Activated CD8-positive, alpha-beta T cell treated with anti-CD3 and anti-CD28 coated beads for 36 hours (primary cell): ENCODE measurements at regions of chr20 and their contacts with region 1.

Region 1: GRCh38 chr20:64168381-64169090 is 4.3 kb downstream of the MYT1 start:
- DNase-seq: no peak
- ATAC-seq: no peak
- H3K4me3 Mint-ChIP-seq: no peak overlapping the region
- H3K27ac Mint-ChIP-seq: no peak overlapping the region
- H3K4me1 Mint-ChIP-seq: no peaks in the 10 kb centered on the region
- H3K27me3 Mint-ChIP-seq: peaks cover 22% of the 10 kb centered on the region
- CTCF ChIP-seq: no peak

Region 2: GRCh38 chr20:64069614-64070243 is 98.8 kb before region 1 on chr20:
- CTCF ChIA-PET with region 1: no interaction called
- POLR2A ChIA-PET with region 1: no interaction called
- intact Hi-C with region 1: no loop called
- DNase-seq: peak; percentile 49
- ATAC-seq: no peak
- H3K4me3 Mint-ChIP-seq: no peak overlapping the region
- H3K27ac Mint-ChIP-seq: no peak overlapping the region
- H3K4me1 Mint-ChIP-seq: peaks cover 23% of the 10 kb centered on the region
- H3K27me3 Mint-ChIP-seq: no peaks in the 10 kb centered on the region
- CTCF ChIP-seq: peak; percentile 84

Region 3: GRCh38 chr20:64101731-64102621 is 66.6 kb before region 1 on chr20:
- CTCF ChIA-PET with region 1: no interaction called
- POLR2A ChIA-PET with region 1: no interaction called
- intact Hi-C with region 1: no loop called
- DNase-seq: peak; percentile 79
- ATAC-seq: peak; percentile 82
- H3K4me3 Mint-ChIP-seq: peak overlapping the region; percentile 46
- H3K27ac Mint-ChIP-seq: no peak overlapping the region
- H3K4me1 Mint-ChIP-seq: peaks cover 16% of the 10 kb centered on the region
- H3K27me3 Mint-ChIP-seq: peaks cover 14% of the 10 kb centered on the region
- CTCF ChIP-seq: peak; percentile 98

Region 4: GRCh38 chr20:64188682-64189529 is 20.4 kb after region 1 on chr20:
- CTCF ChIA-PET with region 1: no interaction called
- POLR2A ChIA-PET with region 1: no interaction called
- intact Hi-C with region 1: no loop called
- DNase-seq: no peak
- ATAC-seq: no peak
- H3K4me3 Mint-ChIP-seq: no peak overlapping the region
- H3K27ac Mint-ChIP-seq: no peak overlapping the region
- H3K4me1 Mint-ChIP-seq: peaks cover 4% of the 10 kb centered on the region
- H3K27me3 Mint-ChIP-seq: peaks cover 10% of the 10 kb centered on the region
- CTCF ChIP-seq: no peak

Region 5: DNA sequence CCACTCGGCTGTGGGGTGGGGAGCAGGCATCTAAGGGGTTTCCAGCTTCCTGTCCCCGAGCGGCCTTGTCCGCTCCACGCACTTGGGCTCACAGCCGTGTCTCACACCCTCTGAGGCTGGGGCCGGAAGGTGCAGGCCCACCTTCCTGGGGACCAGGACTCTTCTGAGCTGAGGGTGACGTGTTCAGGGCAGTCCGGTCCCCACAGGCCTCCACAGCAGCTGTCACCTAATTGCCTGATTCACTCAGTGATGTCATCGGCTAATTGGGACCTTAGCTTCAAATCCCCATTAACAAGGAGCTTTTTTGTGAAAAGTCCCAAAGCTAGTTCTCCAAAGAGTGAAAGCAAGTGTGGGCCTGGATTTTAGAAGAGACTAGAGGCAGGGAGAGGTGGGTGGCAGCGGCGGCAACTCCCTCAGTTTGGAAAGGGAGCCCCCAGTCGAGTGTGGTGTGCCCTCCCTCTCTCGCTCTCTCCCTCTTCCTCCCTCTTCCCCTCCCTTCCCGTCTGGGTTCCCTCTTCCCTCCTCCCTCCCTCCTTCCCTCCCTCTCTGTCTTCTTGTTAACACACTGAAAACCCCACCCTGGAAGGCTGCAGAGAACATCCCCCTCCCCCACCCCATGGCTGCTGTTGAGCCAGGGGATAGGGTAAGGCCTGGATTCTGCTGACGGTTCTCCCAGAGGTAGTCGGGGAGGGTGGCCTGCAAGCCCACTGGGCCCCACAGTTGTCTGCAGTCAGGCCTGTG is 34.7 kb after region 1 on chr20:
- CTCF ChIA-PET with region 1: no interaction called
- POLR2A ChIA-PET with region 1: no interaction called
- intact Hi-C with region 1: loop called (anchors 5 kb)
- DNase-seq: no peak
- ATAC-seq: no peak
- H3K4me3 Mint-ChIP-seq: no peak overlapping the region
- H3K27ac Mint-ChIP-seq: no peak overlapping the region
- H3K4me1 Mint-ChIP-seq: no peaks in the 10 kb centered on the region
- H3K27me3 Mint-ChIP-seq: peaks cover 2% of the 10 kb centered on the region
- CTCF ChIP-seq: no peak